GM12878 (cell line): ENCODE measurements at regions of chr7 and their contacts with region 1.

Region 1: GRCh38 chr7:2698581-2699288 is 10.7 kb downstream of the AMZ1 start:
- DNase-seq: peak; percentile 93
- ATAC-seq: peak; percentile 96
- H3K4me3 ChIP-seq: 0 out of 2 replicates have a peak overlapping the region, but pooled peaks have one; percentile 32
- H3K27ac ChIP-seq: peak overlapping the region; percentile 38; the same call in 1 of the 2 replicates
- H3K4me1 ChIP-seq: peaks cover 21% of the 10 kb centered on the region
- H3K27me3 ChIP-seq: no peaks in the 10 kb centered on the region
- CTCF ChIP-seq: no peak
- EP300 ChIP-seq: peak; percentile 88 to 98
- POLR2A ChIP-seq: no peak
- RAD21 ChIP-seq: 0 out of 2 replicates have a peak, but pooled peaks have one; percentile 5

Region 2: DNA sequence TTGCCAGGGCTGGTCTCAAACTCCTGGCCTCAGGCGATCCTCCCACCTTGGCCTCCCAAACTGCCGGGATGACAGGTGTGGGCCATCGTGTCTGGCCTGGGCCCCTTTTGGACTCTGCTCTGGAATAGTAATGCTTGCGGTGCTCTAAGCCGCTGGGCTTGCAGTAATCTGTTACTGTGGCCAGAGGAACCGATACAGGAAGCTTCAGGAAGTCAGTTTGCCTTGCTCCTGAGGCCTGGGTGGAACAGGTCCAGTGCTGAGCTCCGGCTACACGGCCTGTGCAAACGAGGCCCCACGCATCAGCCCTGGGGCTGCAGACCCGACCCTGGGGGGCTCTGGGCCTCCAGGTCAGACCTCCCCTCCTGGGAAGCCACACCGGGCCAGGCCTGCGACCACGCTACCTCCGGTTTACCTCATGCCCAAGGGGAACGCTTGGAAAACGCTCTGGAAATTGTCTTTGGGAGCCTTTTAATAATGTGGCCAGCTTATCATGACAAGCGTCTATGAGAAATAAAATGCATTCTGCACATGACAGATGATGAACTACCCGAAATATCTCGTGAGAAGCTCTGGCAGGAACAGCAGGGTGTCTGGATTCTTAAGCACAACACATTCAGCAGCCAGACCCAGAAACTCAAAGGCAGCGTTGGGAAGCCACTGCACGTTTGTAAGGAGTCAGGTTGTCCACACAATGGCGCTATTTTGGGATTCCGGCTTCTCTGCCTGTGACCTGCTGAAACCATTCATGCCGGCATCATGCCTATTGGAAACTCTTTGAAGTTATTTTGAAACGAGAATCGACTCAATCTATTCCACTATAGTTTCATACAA is 1734.1 kb before region 1 on chr7:
- CTCF ChIA-PET with region 1: no interaction called
- POLR2A ChIA-PET with region 1: no interaction called
- RAD21 ChIA-PET with region 1: no interaction called
- SMC1A ChIA-PET with region 1: no interaction called
- in situ Hi-C with region 1: no loop called
- intact Hi-C with region 1: no loop called
- DNase-seq: no peak
- ATAC-seq: peak; percentile 47
- H3K4me3 ChIP-seq: no peak overlapping the region
- H3K27ac ChIP-seq: no peak overlapping the region
- H3K4me1 ChIP-seq: peaks cover 8% of the 10 kb centered on the region
- H3K27me3 ChIP-seq: no peaks in the 10 kb centered on the region
- CTCF ChIP-seq: no peak
- EP300 ChIP-seq: no peak
- POLR2A ChIP-seq: peak; percentile 59
- RAD21 ChIP-seq: no peak

Region 3: GRCh38 chr7:2621061-2621828 is 77.5 kb before region 1 on chr7:
- CTCF ChIA-PET with region 1: no interaction called
- POLR2A ChIA-PET with region 1: no interaction called
- RAD21 ChIA-PET with region 1: no interaction called
- SMC1A ChIA-PET with region 1: no interaction called
- in situ Hi-C with region 1: no loop called
- intact Hi-C with region 1: no loop called
- DNase-seq: no peak
- ATAC-seq: no peak
- H3K4me3 ChIP-seq: no peak overlapping the region
- H3K27ac ChIP-seq: no peak overlapping the region
- H3K4me1 ChIP-seq: no peaks in the 10 kb centered on the region
- H3K27me3 ChIP-seq: no peaks in the 10 kb centered on the region
- CTCF ChIP-seq: no peak
- EP300 ChIP-seq: no peak
- POLR2A ChIP-seq: no peak
- RAD21 ChIP-seq: no peak

Region 4: GRCh38 chr7:2680792-2681490 is 17.8 kb before region 1 on chr7:
- CTCF ChIA-PET with region 1: interaction called, 10 read pairs
- POLR2A ChIA-PET with region 1: interaction called, 3 read pairs
- RAD21 ChIA-PET with region 1: interaction called, 8 read pairs
- SMC1A ChIA-PET with region 1: interaction called, 41 read pairs
- in situ Hi-C with region 1: no loop called
- intact Hi-C with region 1: no loop called
- DNase-seq: no peak
- ATAC-seq: peak; percentile 91
- H3K4me3 ChIP-seq: no peak overlapping the region
- H3K27ac ChIP-seq: no peak overlapping the region
- H3K4me1 ChIP-seq: no peaks in the 10 kb centered on the region
- H3K27me3 ChIP-seq: no peaks in the 10 kb centered on the region; a peak in 1 of 4 replicates
- CTCF ChIP-seq: peak; percentile 64 to 72 (median 72)
- EP300 ChIP-seq: no peak
- POLR2A ChIP-seq: no peak
- RAD21 ChIP-seq: peak; percentile 70

Region 5: DNA sequence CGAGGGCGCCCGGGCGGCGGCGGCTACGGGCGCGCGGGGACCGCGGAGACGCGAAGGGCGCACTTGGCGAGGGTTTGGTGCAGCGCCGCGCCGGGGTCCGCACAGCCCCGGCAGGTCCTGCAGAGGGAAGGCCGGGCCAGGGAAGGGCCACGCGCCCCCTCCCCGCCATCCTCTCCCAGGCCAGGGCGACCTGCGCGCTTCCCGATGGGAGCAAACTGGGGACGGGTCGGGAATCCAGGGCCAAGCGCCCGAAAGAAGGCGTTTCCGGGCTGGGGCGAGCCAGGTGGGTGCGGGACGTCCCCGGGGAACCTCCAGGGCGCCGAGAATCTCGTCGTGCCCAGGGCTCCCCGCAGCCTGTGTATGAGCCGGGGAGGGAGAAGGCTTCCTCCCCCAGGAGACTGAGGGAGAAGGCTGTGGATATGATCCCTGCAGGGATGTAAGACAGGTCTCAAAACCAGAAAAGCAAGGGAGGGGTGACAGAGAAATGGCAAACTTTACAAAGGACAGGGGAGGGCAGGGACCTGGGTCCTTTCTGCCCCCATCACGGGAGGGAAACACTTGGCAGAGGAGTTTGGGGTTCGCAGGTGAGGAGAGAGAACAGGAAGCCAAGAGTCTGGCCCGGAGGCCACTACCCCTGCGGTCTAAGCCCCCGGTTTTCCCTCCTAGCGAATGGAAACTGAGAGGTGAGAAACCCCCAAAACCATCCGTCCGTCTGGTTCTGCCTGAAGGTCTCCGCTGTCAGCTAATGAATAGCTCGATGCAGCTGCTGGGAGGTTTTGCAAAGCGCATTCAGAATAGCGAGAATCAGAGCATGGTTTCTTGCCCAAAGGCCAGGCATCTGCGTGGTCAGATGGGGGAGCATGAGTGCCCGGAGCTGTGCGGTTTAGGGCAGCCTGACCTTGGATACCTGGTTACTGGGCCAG is 10.1 kb before region 1 on chr7:
- CTCF ChIA-PET with region 1: interaction called, 15 read pairs
- POLR2A ChIA-PET with region 1: interaction called, 12 read pairs
- RAD21 ChIA-PET with region 1: interaction called, 24 read pairs
- SMC1A ChIA-PET with region 1: interaction called, 41 read pairs
- in situ Hi-C with region 1: no loop called
- intact Hi-C with region 1: no loop called
- DNase-seq: peak; percentile 62
- ATAC-seq: peak; percentile 84
- H3K4me3 ChIP-seq: peak overlapping the region; percentile 23; the same call in 1 of the 2 replicates
- H3K27ac ChIP-seq: 0 out of 2 replicates have a peak overlapping the region, but pooled peaks have one; percentile 10
- H3K4me1 ChIP-seq: peaks cover 27% of the 10 kb centered on the region
- H3K27me3 ChIP-seq: peaks cover 3 to 7% of the 10 kb centered on the region in 2 experiments; a peak in 3 of 4 replicates
- CTCF ChIP-seq: no peak
- EP300 ChIP-seq: peak; percentile 71 to 87
- POLR2A ChIP-seq: no peak
- RAD21 ChIP-seq: no peak

Region 6: GRCh38 chr7:2715341-2716231 is 16.9 kb after region 1 on chr7:
- CTCF ChIA-PET with region 1: interaction called, 83 read pairs
- POLR2A ChIA-PET with region 1: interaction called, 36 read pairs
- RAD21 ChIA-PET with region 1: interaction called, 70 read pairs
- SMC1A ChIA-PET with region 1: interaction called, 69 read pairs
- in situ Hi-C with region 1: no loop called
- intact Hi-C with region 1: no loop called
- DNase-seq: no peak
- ATAC-seq: peak; percentile 38
- H3K4me3 ChIP-seq: peak overlapping the region; percentile 17; the same call in 1 of the 2 replicates
- H3K27ac ChIP-seq: peak overlapping the region; percentile 43
- H3K4me1 ChIP-seq: peaks cover 37% of the 10 kb centered on the region
- H3K27me3 ChIP-seq: no peaks in the 10 kb centered on the region
- CTCF ChIP-seq: no peak
- EP300 ChIP-seq: no peak; a peak in 1 of 4 replicates
- POLR2A ChIP-seq: no peak; the same call in 1 of the 2 replicates
- RAD21 ChIP-seq: no peak